ENCODE measurements at regions of chr2 and their contacts with region 1.

Region 1: DNA sequence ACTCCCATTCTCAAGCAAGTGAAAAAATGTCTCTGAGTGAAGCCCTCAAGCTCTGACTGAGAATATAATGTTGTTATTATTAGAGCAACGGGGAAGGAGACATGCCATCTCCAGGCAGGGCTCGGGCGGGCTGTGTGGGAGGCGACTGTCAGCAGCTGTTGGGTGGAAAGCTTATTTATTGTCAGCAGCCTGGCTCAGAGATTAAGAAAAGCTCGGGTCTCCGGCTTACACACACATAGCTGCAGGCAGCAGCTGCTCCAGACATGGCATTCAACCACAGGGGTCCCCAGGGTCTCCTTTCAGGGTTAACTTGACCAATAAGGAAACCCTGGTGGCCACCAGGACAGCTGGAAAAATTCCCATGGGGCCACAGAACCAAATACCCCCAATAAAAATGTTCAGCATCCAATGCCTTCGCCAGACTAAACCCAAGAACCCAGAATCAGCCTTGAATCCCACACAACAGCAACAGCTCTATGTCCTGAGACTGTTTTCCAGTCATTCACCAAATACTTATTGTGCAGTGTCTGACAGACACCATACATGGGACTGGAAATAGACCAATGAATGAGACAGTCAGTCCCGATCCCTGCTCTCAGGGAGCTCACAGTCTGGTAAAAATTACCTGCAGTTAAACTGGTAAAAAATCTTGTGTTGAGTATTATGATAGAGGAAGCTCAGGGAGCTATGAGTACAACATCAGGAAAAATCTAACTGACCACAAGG is 70.5 kb upstream of the RTN4 start:
- DNase-seq: no peak
- H3K4me3 ChIP-seq: no peak overlapping the region
- H3K27me3 ChIP-seq: no peaks in the 10 kb centered on the region
- CTCF ChIP-seq: no peak

Region 2: GRCh38 chr2:54845514-54845913 is 275.3 kb before region 1 on chr2:
- CTCF ChIA-PET with region 1: no interaction called
- POLR2A ChIA-PET with region 1: no interaction called
- DNase-seq: no peak
- H3K4me3 ChIP-seq: no peak overlapping the region
- H3K27me3 ChIP-seq: no peaks in the 10 kb centered on the region
- CTCF ChIP-seq: no peak

Region 3: DNA sequence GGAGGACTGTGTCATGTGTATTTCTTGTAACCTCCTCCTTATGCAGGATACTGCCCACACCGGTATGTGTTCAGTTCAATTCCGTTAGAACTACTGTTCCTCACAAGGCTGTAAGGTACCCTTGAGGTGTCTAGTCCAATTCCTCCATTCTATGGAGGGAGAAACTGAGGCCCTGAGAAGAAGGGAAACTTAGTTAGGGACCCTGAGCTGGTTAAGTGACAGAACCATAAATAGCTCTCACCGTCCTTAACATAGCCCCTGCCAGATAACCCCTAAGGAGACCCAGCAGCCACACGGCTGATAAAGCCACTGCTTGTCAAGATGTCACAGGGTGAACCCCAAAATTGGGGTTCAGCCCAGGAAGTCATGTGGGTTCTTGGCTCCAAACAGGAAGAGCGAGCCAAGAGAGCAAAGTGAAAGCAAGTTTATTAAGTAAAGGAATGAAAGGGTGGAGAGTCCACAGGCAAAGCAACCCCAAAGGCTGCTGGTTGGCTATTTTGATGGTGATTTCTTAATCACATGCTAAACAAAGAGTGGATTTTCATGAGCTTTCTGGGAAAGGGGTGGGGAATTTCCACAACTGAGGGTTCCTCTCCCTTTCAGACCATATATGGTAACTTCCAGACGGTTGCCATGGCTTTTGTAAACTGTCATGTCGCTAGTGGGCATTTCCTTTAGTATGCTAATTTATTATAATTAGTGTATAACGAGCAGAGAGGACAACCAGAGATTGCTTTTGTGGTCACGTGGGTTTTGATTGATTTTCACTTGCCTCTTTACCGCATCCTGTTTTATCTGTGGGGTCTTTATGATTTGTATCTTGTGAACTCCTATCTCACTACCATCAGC is 12.9 kb after region 1 on chr2:
- CTCF ChIA-PET with region 1: interaction called, 12 read pairs
- POLR2A ChIA-PET with region 1: no interaction called
- DNase-seq: no peak
- H3K4me3 ChIP-seq: no peak overlapping the region
- H3K27me3 ChIP-seq: no peaks in the 10 kb centered on the region
- CTCF ChIP-seq: no peak

Measured in BJ (cell line).